ENCODE measurements at regions of chr10 and their contacts with region 1.

Region 1: DNA sequence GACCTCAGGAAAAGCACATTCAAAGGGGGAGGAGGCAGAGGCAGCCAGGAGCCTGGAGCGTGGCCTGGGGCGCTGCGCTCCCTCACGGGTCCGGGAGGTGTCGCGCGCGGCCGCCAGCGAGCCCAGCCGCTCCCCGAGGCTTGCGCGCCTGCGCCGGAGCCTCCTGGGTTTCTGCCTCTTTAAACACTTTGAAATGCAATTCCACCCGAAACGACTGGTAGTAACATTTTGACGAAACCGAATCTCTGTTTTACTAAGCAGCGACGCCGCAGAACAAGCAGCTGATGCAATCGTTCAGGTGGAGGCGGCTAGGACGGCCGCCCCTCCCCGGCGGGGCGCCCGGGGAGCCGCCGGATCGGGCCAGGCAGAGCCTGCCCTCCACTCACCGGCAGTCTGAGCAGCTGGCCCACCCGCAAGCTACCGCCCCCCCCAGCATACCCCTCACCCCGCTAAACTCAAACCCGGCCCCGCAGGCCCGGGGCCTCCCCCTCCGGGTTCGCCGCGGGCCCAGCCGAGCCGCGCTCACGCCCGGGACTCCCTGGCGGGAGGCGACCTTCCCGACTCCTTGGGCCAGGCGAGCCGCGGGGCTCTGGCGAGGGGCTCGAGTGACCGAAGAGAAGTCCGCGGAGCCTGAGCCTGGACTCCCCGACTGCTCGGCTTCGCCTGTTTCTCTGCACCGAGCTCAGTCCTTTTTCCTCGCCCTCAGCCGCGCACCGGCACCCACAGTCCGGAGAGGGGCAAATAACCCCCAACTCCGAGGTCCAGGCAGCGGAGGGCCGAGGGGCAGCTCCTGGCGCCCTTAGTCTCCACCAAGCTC is 3.2 kb downstream of the MKX start:
- DNase-seq: peak; percentile 87
- H3K4me3 ChIP-seq: peak overlapping the region; percentile 53
- H3K27ac ChIP-seq: no peak overlapping the region
- H3K4me1 ChIP-seq: peaks cover 22% of the 10 kb centered on the region
- H3K27me3 ChIP-seq: peaks cover 60% of the 10 kb centered on the region
- CTCF ChIP-seq: peak; percentile 70

Region 2: DNA sequence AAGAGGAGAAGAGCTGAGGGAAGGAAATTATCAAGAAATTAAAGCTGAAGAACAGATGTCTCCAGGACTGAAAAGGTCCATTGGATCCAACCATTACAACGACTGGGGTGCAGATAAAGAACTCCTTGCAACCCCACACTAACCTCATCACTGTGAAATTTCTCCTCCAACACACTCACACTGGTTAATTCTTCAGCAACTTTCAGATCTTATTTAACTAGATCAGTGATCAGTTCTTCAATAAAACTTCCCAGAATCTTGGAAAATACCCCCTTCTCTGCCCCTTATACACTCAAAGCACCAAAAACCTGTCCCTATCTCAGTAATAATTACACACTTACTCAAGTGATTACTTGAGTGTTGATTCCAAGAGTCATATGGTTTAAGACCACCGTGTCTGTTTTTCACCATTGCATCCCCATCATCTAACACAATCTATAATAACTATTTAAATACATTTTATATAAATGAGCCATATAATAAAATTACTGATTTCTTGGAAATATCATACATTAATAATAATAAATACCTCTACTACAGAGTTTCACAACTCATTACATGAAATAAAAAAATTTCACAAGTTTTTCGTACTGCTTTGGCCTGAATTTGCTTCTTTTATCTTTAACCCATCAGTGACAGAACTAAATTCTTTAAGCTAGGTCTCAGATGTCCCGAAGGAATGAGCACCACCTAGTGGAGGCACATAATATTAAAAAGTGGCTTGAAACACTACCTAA is 436.8 kb after region 1 on chr10:
- CTCF ChIA-PET with region 1: interaction called, 3 read pairs
- POLR2A ChIA-PET with region 1: no interaction called
- intact Hi-C with region 1: loop called (anchors 5 kb)
- DNase-seq: peak; percentile 71
- H3K4me3 ChIP-seq: no peak overlapping the region
- H3K27ac ChIP-seq: no peak overlapping the region
- H3K4me1 ChIP-seq: no peaks in the 10 kb centered on the region
- H3K27me3 ChIP-seq: no peaks in the 10 kb centered on the region
- CTCF ChIP-seq: peak; percentile 80

Region 3: GRCh38 chr10:28241741-28242399 is 499.5 kb after region 1 on chr10:
- CTCF ChIA-PET with region 1: interaction called, 4 read pairs
- POLR2A ChIA-PET with region 1: no interaction called
- intact Hi-C with region 1: loop called (anchors 2 kb)
- DNase-seq: peak; percentile 66
- H3K4me3 ChIP-seq: no peak overlapping the region
- H3K27ac ChIP-seq: no peak overlapping the region
- H3K4me1 ChIP-seq: no peaks in the 10 kb centered on the region
- H3K27me3 ChIP-seq: peaks cover 6% of the 10 kb centered on the region
- CTCF ChIP-seq: peak; percentile 90

Region 4: DNA sequence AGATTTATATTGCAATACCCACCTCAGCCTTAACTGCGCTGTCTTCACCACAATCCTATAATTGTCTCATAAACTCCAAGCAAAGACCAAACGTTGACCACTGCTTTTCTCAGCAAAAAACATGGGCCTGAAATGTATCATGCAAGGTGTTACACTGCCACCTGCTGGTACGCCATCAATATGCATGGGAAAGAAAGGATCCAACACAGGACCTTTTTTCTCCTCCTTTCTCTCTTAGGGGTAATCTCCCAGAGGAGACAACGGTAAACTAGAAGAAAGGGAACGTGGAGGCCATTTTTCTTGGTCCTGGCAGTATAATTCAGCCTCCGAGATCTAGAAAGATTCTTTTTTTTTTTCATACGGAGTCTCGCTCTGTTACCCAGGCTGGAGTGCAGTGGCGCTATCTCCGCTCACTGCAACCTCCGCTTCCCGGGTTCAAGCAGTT is 639.5 kb after region 1 on chr10:
- CTCF ChIA-PET with region 1: no interaction called
- POLR2A ChIA-PET with region 1: interaction called, 3 read pairs
- intact Hi-C with region 1: loop called (anchors 10 kb)
- DNase-seq: peak; percentile 91
- H3K4me3 ChIP-seq: no peak overlapping the region
- H3K27ac ChIP-seq: no peak overlapping the region
- H3K4me1 ChIP-seq: no peaks in the 10 kb centered on the region
- H3K27me3 ChIP-seq: no peaks in the 10 kb centered on the region
- CTCF ChIP-seq: peak; percentile 90

Region 5: GRCh38 chr10:28393966-28394568 is 651.7 kb after region 1 on chr10:
- CTCF ChIA-PET with region 1: interaction called, 16 read pairs
- POLR2A ChIA-PET with region 1: no interaction called
- intact Hi-C with region 1: loop called (anchors 10 kb)
- DNase-seq: peak; percentile 79
- H3K4me3 ChIP-seq: no peak overlapping the region
- H3K27ac ChIP-seq: no peak overlapping the region
- H3K4me1 ChIP-seq: no peaks in the 10 kb centered on the region
- H3K27me3 ChIP-seq: no peaks in the 10 kb centered on the region
- CTCF ChIP-seq: peak; percentile 97